T-cell (primary cell): ENCODE measurements at regions of chr1 and their contacts with region 1.

Region 1: GRCh38 chr1:9428601-9429341 is 110.5 kb upstream of the SLC25A33 start:
- DNase-seq: peak; percentile 97 to 100 (median 99)
- ATAC-seq: peak; percentile 78 to 89 (median 84)
- H3K4me3 ChIP-seq: peak overlapping the region; percentile 60 to 78
- H3K4me3 Mint-ChIP-seq: peak overlapping the region; percentile 86 to 94 (median 92)
- H3K27ac ChIP-seq: peak overlapping the region; percentile 74
- H3K27ac Mint-ChIP-seq: peak overlapping the region; percentile 97 to 98
- H3K4me1 ChIP-seq: peaks cover 39 to 56% of the 10 kb centered on the region in 2 experiments
- H3K4me1 Mint-ChIP-seq: peaks cover 47 to 59% (median 56%) of the 10 kb centered on the region in 3 donors
- H3K27me3 ChIP-seq: peaks cover 0 to 2% of the 10 kb centered on the region in 2 experiments
- H3K27me3 Mint-ChIP-seq: no peaks in the 10 kb centered on the region

Region 2: DNA sequence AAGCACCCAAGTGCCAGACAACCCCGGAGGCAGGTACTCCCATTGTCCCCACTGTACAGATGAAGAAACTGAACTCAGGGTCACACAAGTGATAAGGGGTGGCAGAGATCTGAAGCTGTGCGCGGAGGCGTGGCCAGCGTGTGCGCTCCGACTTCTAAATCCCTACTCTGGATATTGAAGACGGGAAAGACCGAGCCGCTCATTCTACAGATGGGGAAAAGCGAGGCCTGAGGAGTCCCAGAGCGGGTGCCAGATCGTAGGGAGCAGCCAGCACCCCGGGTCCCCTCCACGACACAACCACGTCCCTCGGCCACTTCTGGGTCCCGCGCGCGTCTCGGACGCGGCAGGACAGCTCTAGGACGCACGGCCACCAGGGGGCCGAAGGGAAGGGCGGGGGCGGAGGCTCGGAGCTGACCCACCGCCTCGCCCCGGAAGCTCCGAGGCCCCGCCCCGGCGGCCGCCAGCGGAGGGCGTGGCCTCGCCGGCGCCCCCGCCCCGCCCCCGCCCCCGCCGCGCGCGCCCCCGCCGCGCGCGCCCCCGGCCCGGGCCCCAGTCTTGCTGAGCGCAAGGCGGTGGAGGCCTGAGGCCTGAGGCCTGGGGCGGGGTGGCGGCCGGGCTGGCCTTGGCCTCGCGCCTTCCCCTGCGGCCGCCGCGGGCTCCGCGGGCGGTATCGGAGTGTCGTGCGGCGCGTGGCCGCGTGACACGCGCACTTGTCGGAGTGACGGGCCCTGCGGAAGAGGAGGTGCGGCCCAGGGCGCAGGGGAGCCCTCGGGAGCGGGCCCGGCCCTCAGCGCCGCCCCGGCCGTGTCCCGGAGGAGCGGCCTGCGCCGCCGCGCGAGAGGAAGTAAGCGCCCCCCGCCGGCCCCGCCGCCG is 194.3 kb before region 1 on chr1 and contains the start of gene H6PD:
- CTCF ChIA-PET with region 1: interaction called, 3 to 10 read pairs
- POLR2A ChIA-PET with region 1: interaction called in 1 of 2 experiments, 9 read pairs
- DNase-seq: peak; percentile 38 to 84 (median 62)
- ATAC-seq: peak; percentile 85 to 88 (median 86)
- H3K4me3 ChIP-seq: peak within 1 kb of the TSS; percentile 71 to 74
- H3K4me3 Mint-ChIP-seq: peak within 1 kb of the TSS; percentile 91 to 96 (median 92)
- H3K27ac ChIP-seq: peak within 1 kb of the TSS; percentile 73
- H3K27ac Mint-ChIP-seq: peak within 1 kb of the TSS; percentile 96 to 97
- H3K4me1 ChIP-seq: peaks cover 7 to 27% of the 10 kb centered on the region in 2 experiments
- H3K4me1 Mint-ChIP-seq: peaks cover 31 to 36% (median 35%) of the 10 kb centered on the region in 3 donors
- H3K27me3 ChIP-seq: no peaks in the 10 kb centered on the region
- H3K27me3 Mint-ChIP-seq: no peaks in the 10 kb centered on the region
- total RNA-seq, gene H6PD: 17.6 to 26.5 (median 23.9) TPM

Region 3: DNA sequence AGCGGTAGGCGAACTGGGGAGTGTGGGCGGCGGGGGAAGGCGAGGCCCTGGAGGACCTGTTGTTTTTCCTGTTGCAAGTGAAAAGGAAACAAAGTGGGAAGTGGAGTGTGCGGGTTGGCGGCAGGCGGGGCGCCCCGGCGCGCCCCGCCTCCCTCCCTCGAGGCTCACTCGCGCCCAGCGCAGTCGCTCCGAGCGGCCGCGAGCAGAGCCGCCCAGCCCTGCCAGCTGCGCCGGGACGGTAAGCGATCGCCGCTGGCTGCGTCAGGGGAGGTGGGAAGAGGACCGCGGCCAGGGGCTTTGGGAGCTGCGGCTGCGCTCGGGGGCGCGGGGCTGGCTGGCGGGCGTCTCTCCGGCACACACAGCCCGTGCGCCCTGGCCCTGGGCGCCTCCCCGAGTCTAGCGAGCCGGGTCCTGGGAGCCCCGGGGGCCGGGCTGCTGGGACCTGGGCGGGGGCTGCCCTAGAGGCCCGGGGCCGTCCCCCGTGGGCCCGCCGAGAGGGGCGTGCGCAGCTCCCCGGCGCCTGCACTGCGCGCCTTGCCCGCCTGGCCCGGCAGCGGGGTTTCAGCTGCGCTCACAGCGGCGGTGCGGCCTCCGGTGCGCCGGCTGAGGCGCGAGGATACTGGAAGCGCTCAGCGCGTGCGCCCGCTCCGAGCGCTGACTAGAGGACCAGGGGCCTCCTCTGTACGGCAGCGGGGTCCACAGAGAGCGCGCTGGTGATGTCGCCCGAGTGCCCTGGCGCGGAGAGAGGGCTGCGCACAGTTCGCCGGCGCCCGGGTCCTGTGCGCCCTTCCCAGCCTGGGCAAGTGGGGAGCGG is 223.0 kb after region 1 on chr1 and contains the start of gene PIK3CD:
- CTCF ChIA-PET with region 1: no interaction called
- POLR2A ChIA-PET with region 1: interaction called in 1 of 2 experiments, 10 read pairs
- DNase-seq: peak in 23 of 35 experiments; percentile 3 to 66 (median 43)
- ATAC-seq: peak; percentile 34 to 55 (median 50)
- H3K4me3 ChIP-seq: peak within 1 kb of the TSS; percentile 70 to 82
- H3K4me3 Mint-ChIP-seq: peak within 1 kb of the TSS; percentile 97 to 100 (median 100)
- H3K27ac ChIP-seq: peak within 1 kb of the TSS; percentile 58
- H3K27ac Mint-ChIP-seq: peak within 1 kb of the TSS; percentile 98 to 99
- H3K4me1 ChIP-seq: peaks cover 6 to 77% of the 10 kb centered on the region in 2 experiments
- H3K4me1 Mint-ChIP-seq: peaks cover 73 to 76% (median 73%) of the 10 kb centered on the region in 3 donors
- H3K27me3 ChIP-seq: no peaks in the 10 kb centered on the region
- H3K27me3 Mint-ChIP-seq: no peaks in the 10 kb centered on the region
- total RNA-seq, gene PIK3CD: 246 to 313 (median 280) TPM

Region 4: GRCh38 chr1:9753121-9753531 is 324.4 kb after region 1 on chr1:
- CTCF ChIA-PET with region 1: no interaction called
- POLR2A ChIA-PET with region 1: no interaction called
- DNase-seq: no peak
- ATAC-seq: no peak
- H3K4me3 ChIP-seq: no peak overlapping the region
- H3K4me3 Mint-ChIP-seq: no peak overlapping the region
- H3K27ac ChIP-seq: no peak overlapping the region
- H3K27ac Mint-ChIP-seq: no peak overlapping the region
- H3K4me1 ChIP-seq: no peaks in the 10 kb centered on the region
- H3K4me1 Mint-ChIP-seq: peaks cover 3 to 12% (median 10%) of the 10 kb centered on the region in 3 donors
- H3K27me3 ChIP-seq: no peaks in the 10 kb centered on the region
- H3K27me3 Mint-ChIP-seq: no peaks in the 10 kb centered on the region